ENCODE measurements at regions of chr5 and their contacts with region 1.

Region 1: DNA sequence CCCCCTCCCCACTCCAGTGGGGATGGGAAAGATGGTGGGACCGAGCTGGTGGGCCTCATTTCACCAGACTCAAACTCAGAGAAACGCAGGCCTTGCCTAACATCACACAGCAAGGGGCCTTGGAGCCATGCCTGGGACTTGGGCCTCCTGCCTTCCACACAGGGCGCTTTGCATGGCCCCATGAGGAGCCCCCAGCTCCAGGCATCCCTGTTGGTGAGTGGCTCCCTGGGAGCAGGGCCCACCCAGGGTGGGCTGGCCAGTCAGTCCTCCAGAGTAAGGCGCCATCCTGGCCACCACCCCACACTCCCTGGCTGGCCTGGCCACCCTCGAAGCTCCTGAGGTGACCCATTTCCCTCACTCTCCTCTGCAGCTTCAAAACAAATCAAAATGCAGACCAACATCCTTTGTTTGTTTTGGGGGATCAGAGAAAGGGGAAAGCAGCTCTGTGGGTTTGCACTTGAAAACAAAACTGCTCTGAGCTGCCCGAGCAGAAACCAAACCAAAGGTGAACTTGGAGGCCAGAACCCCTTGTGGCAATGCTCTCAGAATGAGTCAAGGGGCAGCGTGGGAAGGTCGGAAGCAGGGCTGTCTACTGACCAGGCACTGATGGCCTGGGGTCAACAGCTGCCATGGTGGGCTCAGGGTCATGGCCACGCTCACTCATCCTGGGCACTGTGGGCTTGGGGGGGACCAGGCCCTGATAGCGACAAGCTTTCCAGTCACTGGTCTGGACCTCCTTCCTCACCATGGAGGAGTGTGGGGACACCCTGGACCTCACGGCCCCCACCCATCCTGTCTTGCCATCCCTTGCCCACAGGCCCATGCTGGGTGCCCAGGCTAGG is 37.0 kb upstream of the VDAC1 start:
- DNase-seq: no peak
- H3K4me3 ChIP-seq: no peak overlapping the region
- H3K27ac ChIP-seq: no peak overlapping the region
- H3K4me1 ChIP-seq: peaks cover 3% of the 10 kb centered on the region
- H3K27me3 ChIP-seq: no peaks in the 10 kb centered on the region
- CTCF ChIP-seq: no peak
- POLR2A ChIP-seq: no peak

Region 2: GRCh38 chr5:134138416-134139376 is 96.9 kb after region 1 on chr5:
- intact Hi-C with region 1: loop called (anchors 10 kb)
- DNase-seq: peak; percentile 6
- H3K4me3 ChIP-seq: no peak overlapping the region
- H3K27ac ChIP-seq: no peak overlapping the region
- H3K4me1 ChIP-seq: no peaks in the 10 kb centered on the region
- H3K27me3 ChIP-seq: no peaks in the 10 kb centered on the region
- CTCF ChIP-seq: no peak
- POLR2A ChIP-seq: no peak

Region 3: DNA sequence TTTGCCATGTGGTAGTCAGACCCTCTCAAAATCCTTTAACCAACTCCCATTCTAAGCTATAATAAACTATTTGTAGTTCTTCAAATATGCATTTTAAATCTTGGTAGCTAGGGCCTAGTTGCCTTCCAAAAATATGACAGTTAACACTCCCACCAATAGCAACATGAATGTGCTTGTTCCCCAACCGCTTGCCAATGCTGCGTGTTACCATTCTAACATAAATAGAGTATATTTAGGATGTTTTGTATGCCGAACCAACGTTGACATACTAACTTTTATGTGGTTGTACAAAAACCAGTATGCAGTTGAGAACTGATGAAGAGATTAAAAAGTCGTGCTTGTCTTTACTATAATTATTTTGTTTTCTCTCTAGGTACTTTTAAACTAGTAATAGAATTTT is 338.6 kb after region 1 on chr5:
- intact Hi-C with region 1: no loop called
- DNase-seq: no peak
- H3K4me3 ChIP-seq: no peak overlapping the region
- H3K27ac ChIP-seq: no peak overlapping the region
- H3K4me1 ChIP-seq: no peaks in the 10 kb centered on the region
- H3K27me3 ChIP-seq: no peaks in the 10 kb centered on the region
- CTCF ChIP-seq: no peak
- POLR2A ChIP-seq: no peak

Measured in testis (tissue), 5 donors.